A549 (cell line): ENCODE measurements at regions of chr1 and their contacts with region 1.

Region 1: DNA sequence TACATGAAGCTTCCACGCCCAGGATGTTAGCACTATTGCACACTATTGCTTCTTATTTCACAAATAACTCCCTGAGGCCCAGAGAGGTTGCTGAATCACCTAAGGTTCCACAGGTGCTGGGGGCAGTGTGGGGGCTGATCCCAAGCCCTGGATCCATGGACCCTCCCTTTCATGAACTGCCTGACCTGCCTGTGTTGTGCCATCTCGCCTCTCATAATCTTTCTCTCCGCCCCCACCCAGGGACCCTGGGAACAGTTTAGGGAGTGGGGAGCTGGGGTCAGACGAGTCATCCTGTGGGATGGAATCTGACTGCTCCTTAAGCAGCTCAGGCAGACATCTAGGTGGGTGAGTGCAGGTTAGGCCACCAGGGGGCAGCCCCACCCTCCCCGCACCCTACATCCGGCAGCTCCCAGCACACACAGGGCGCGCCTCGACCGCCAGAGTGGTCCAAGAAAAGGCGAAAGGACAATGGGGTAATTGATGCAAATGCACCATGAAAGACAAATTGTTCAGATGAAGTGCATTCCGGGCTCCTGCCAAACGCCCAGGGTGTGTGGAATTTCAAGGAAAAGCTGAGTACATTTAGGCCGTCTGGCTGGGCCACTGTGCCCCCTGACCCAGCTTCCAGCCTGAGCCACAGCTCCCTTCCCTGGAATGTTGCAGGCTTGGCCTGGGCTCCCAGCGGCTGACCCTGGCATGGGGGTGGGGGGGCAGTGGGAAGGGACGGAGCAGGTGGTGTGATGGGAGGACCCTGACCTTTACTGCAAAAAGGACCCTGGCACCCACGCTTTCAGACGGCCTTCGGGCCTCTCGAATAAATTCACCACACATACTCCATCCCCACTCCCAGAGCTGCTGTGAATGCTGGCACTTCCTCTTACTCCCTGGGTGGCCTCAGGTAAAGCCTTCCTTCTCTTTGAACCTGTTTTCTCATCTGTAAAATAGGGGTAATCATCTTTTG is 20.8 kb downstream of the PHLDA3 start:
- DNase-seq: peak; percentile 84 to 94
- ATAC-seq: peak; percentile 95 to 99
- H3K4me3 ChIP-seq: no peak overlapping the region
- H3K27ac ChIP-seq: peak overlapping the region; percentile 53 to 87
- H3K4me1 ChIP-seq: peaks cover 29% of the 10 kb centered on the region
- CTCF ChIP-seq: peak; percentile 90
- EP300 ChIP-seq: no peak
- POLR2A ChIP-seq: no peak
- RAD21 ChIP-seq: peak; percentile 90 to 92

Region 2: DNA sequence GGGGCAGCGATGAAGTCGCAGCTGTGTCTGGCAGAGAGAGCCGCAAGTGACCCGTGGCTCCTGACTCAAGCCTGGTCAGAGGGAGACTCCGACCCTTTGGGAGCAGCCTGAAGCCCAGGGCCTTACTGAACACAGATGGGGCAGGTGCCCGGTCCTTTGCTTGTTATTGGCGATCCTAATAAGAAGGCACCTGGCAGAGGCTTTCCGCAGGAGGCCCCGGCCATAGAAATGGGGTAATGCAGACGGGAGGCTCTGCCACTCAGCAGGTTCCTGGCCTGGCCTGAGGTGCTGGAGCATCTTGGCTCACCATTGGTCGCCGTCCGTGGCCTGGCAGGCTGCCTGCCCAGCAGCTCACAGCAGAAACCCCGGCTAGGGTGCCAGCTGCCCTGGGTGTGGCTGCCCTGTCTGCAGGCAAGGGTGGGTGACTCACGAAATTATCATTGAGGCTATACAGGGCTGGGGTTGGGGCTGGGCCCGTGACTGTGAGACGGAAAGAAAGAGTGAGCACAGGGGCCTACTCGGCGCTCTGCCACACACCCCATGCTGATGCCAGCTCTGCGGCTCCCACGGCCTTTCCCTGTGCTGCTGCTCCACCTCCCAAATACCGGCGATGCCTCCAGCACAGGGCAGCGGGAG is 173.0 kb before region 1 on chr1:
- CTCF ChIA-PET with region 1: no interaction called
- POLR2A ChIA-PET with region 1: no interaction called
- DNase-seq: peak; percentile 91 to 94
- ATAC-seq: peak; percentile 93 to 95
- H3K4me3 ChIP-seq: no peak overlapping the region
- H3K27ac ChIP-seq: peak overlapping the region; percentile 87
- H3K4me1 ChIP-seq: peaks cover 40% of the 10 kb centered on the region
- CTCF ChIP-seq: no peak
- EP300 ChIP-seq: peak in 1 of 2 experiments; percentile 53; a peak in 1 of 5 replicates
- POLR2A ChIP-seq: no peak
- RAD21 ChIP-seq: peak; percentile 11 to 25; a peak in 1 of 5 replicates

Region 3: GRCh38 chr1:201408176-201408833 is 39.9 kb before region 1 on chr1:
- CTCF ChIA-PET with region 1: interaction called, 15 read pairs
- POLR2A ChIA-PET with region 1: no interaction called
- DNase-seq: peak; percentile 80 to 93
- ATAC-seq: peak; percentile 74 to 91
- H3K4me3 ChIP-seq: no peak overlapping the region
- H3K27ac ChIP-seq: peak overlapping the region; percentile 82 to 92
- H3K4me1 ChIP-seq: peaks cover 57% of the 10 kb centered on the region
- CTCF ChIP-seq: peak; percentile 95
- EP300 ChIP-seq: no peak
- POLR2A ChIP-seq: no peak
- RAD21 ChIP-seq: peak; percentile 88

Region 4: GRCh38 chr1:201426479-201427310 is 21.5 kb before region 1 on chr1:
- CTCF ChIA-PET with region 1: interaction called, 158 read pairs
- POLR2A ChIA-PET with region 1: no interaction called
- DNase-seq: no peak
- ATAC-seq: no peak
- H3K4me3 ChIP-seq: no peak overlapping the region
- H3K27ac ChIP-seq: no peak overlapping the region
- H3K4me1 ChIP-seq: no peaks in the 10 kb centered on the region
- CTCF ChIP-seq: no peak
- EP300 ChIP-seq: no peak
- POLR2A ChIP-seq: no peak
- RAD21 ChIP-seq: no peak

Region 5: GRCh38 chr1:201468844-201469511 is 20.8 kb after region 1 on chr1 and contains the start of gene PHLDA3:
- CTCF ChIA-PET with region 1: interaction called, 318 read pairs
- POLR2A ChIA-PET with region 1: interaction called, 28 read pairs
- DNase-seq: peak; percentile 77 to 78
- ATAC-seq: peak; percentile 81 to 87
- H3K4me3 ChIP-seq: peak within 1 kb of the TSS; percentile 80
- H3K27ac ChIP-seq: peak within 1 kb of the TSS; percentile 93 to 99
- H3K4me1 ChIP-seq: peaks cover 50% of the 10 kb centered on the region
- CTCF ChIP-seq: peak; percentile 8; the same call in 1 of the 3 replicates
- EP300 ChIP-seq: no peak
- POLR2A ChIP-seq: peak; percentile 85
- RAD21 ChIP-seq: peak in 1 of 2 experiments; percentile 24; a peak in 2 of 5 replicates
- polyA plus RNA-seq, gene PHLDA3: 34.3 and 40.5 TPM in 2 replicates

Region 6: DNA sequence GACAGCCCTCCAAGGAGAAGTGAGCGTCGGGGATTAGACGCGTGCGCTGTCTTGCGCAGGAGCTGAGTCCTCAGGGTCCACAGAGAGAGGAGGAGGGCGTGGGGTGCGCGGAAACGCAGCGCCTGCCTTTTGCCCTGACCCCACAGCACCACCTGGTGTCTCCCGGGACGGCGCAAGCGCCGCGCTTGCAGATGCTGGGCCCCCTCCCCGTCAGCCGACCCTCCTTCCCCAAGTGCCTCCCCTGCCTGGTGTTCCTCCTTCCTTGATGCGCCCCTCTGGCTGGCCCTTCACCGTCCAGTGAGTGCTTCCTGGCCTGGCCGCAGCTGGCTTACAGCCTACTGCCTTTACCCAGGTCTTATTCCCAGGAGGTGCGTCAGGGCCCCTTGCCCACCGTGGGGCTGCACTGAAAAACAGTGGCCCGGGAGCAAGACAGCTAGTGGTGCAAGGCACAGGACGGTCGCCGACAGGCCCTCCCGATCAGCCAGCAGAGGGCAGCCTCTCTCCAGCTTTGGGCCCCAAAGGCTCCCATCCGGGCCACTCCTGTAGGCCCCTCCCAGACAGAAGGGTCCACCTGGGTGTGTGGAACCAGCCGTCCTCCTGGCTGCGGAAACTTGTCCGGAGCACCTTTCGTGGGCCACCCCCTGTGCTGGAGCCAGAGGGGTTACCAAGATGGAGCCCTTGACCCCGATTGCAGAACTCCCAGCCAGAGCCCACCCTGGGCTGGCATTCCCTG is 33.7 kb after region 1 on chr1:
- CTCF ChIA-PET with region 1: interaction called, 318 read pairs
- POLR2A ChIA-PET with region 1: interaction called, 19 read pairs
- DNase-seq: peak; percentile 86 to 92
- ATAC-seq: peak; percentile 55 to 83
- H3K4me3 ChIP-seq: no peak overlapping the region
- H3K27ac ChIP-seq: peak overlapping the region; percentile 77 to 86
- H3K4me1 ChIP-seq: peaks cover 50% of the 10 kb centered on the region
- CTCF ChIP-seq: peak; percentile 93
- EP300 ChIP-seq: no peak
- POLR2A ChIP-seq: no peak
- RAD21 ChIP-seq: peak; percentile 97 to 98

Region 7: GRCh38 chr1:201488817-201489589 is 40.8 kb after region 1 on chr1:
- CTCF ChIA-PET with region 1: interaction called, 32 read pairs
- POLR2A ChIA-PET with region 1: no interaction called
- DNase-seq: peak; percentile 88 to 90
- ATAC-seq: peak; percentile 66 to 76
- H3K4me3 ChIP-seq: peak overlapping the region; percentile 26
- H3K27ac ChIP-seq: peak overlapping the region; percentile 86 to 90
- H3K4me1 ChIP-seq: peaks cover 84% of the 10 kb centered on the region
- CTCF ChIP-seq: no peak
- EP300 ChIP-seq: peak; percentile 71 to 91; a peak in 3 of 5 replicates
- POLR2A ChIP-seq: no peak
- RAD21 ChIP-seq: 0 out of 5 replicates have a peak, but pooled peaks of 1 of the 2 experiments have one; percentile 15

Region 8: GRCh38 chr1:201506556-201507359 is 58.6 kb after region 1 on chr1 and contains the start of gene CSRP1:
- CTCF ChIA-PET with region 1: interaction called, 376 read pairs
- POLR2A ChIA-PET with region 1: interaction called, 3 read pairs
- DNase-seq: peak; percentile 88 to 98
- ATAC-seq: peak; percentile 82 to 85
- H3K4me3 ChIP-seq: peak within 1 kb of the TSS; percentile 66
- H3K27ac ChIP-seq: peak within 1 kb of the TSS; percentile 87 to 96
- H3K4me1 ChIP-seq: peaks cover 62% of the 10 kb centered on the region
- CTCF ChIP-seq: no peak; the same call in 2 of the 3 replicates
- EP300 ChIP-seq: no peak
- POLR2A ChIP-seq: peak; percentile 92
- RAD21 ChIP-seq: no peak; a peak in 1 of 5 replicates
- polyA plus RNA-seq, gene CSRP1: 256 and 277 TPM in 2 replicates